Activated naive CD4-positive, alpha-beta T cell treated with anti-CD3 and anti-CD28 coated beads for 36 hours (primary cell): ENCODE measurements at regions of chr6 and their contacts with region 1.

Region 1: DNA sequence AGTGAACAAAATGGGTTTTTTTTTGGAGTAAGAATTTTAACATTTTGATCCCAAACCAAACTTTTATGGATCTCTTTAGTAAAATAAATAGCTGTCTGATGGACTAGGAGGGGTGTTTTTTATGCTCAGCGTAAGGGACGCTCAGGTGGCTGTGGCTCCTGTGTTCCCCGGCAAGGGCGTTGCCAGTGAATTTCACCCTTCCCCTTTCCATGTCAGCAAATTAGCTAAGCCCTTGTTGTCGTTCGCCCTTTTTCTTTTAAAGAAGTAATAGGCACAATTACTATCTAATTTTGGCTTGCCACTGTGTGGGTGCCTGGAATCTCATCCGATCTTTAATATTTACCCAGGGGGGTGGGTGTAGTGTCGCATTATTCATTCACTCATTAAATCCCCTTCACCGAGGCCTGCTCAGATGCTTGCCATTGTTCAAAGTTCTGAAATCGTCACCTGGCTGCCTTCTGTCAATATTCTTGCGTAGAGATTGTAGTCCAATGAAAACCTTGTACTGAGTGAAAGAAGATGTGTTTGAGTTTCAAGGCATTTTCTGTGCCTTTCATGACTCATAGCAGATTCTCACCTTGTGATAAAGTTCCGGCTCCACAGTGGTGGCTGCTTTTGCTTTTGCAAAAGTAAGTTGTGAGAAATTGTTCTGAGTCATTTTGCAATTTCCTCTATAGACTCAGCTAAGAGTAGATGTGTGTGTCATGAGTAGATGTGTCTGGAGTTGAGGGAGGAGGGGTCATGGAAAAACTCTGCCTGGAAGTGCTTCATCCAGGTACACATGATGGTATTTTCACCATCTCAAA is 40.0 kb upstream of the CLDN20 start:
- DNase-seq: peak; percentile 82
- H3K4me3 Mint-ChIP-seq: no peak overlapping the region
- H3K27ac Mint-ChIP-seq: peak overlapping the region; percentile 74
- H3K4me1 Mint-ChIP-seq: peaks cover 25% of the 10 kb centered on the region
- H3K27me3 Mint-ChIP-seq: peaks cover 18% of the 10 kb centered on the region

Region 2: GRCh38 chr6:154352898-154353585 is 870.8 kb before region 1 on chr6:
- CTCF ChIA-PET with region 1: no interaction called
- intact Hi-C with region 1: loop called (anchors 1 kb)
- DNase-seq: peak; percentile 83
- H3K4me3 Mint-ChIP-seq: no peak overlapping the region
- H3K27ac Mint-ChIP-seq: no peak overlapping the region
- H3K4me1 Mint-ChIP-seq: peaks cover 38% of the 10 kb centered on the region
- H3K27me3 Mint-ChIP-seq: peaks cover 25% of the 10 kb centered on the region

Region 3: DNA sequence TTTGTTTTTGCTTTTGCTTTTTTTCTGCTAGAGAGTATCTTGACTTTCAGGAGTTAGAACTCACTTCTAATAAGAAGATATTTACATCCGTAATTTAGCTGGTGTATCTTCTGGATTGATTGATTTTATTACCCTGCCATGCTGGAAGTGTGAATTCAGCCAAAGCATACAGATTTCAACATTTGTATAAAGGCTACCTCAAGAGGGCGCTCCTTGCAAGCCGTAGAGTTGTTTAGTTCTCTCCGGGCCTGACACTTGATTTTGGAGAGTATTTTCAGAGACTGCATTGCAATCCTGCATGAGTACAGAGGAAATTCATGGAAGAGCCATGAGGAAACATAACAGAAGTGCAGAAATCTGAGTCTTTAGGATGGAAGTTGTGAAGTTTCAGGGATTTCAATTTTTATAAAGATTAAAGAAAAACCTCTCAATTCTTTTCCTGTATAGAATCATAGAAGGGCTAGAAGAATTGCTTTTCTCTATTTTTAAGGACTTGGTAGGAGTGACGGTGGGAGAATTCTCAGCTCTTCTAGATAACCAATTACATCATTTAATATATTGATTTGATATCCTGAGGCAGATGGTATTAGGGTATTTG is 295.4 kb before region 1 on chr6:
- CTCF ChIA-PET with region 1: no interaction called
- intact Hi-C with region 1: loop called (anchors 1 kb)
- DNase-seq: peak; percentile 88
- H3K4me3 Mint-ChIP-seq: no peak overlapping the region
- H3K27ac Mint-ChIP-seq: no peak overlapping the region
- H3K4me1 Mint-ChIP-seq: peaks cover 3% of the 10 kb centered on the region
- H3K27me3 Mint-ChIP-seq: no peaks in the 10 kb centered on the region

Region 4: GRCh38 chr6:155026022-155026726 is 197.7 kb before region 1 on chr6:
- CTCF ChIA-PET with region 1: no interaction called
- intact Hi-C with region 1: no loop called
- DNase-seq: no peak
- H3K4me3 Mint-ChIP-seq: no peak overlapping the region
- H3K27ac Mint-ChIP-seq: no peak overlapping the region
- H3K4me1 Mint-ChIP-seq: peaks cover 5% of the 10 kb centered on the region
- H3K27me3 Mint-ChIP-seq: no peaks in the 10 kb centered on the region

Region 5: DNA sequence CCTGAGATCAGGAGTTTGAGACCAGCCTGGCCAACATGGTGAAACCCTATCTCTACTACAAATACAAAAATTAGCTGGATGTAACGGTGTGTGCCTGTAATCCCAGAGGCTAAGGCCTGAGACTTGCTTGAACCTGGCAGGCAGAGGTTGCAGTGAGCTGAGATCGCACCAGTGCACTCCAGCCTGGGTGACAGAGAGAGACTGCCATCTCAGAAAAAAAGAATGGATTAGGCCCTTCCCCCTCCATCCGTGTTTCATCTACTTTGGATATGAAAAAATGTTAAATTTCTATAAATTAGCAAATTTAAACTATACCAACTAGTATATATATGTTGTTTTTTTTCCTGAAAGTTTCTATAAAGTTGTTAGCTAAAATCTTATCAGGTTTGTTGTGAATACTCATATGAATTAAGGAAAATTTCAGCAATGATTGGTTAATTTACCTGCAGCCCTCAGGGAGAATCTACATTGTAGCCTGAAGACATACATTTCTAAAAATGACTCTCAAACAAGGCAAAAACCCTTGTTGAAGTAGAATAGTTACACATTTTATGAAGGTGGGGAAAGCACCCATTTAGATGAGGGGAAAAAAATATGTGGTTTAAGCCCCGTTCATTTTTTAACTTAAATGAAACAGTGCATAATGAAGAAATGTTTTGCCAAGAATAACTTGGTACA is 107.8 kb before region 1 on chr6:
- CTCF ChIA-PET with region 1: no interaction called
- intact Hi-C with region 1: loop called (anchors 1 kb)
- DNase-seq: no peak
- H3K4me3 Mint-ChIP-seq: no peak overlapping the region
- H3K27ac Mint-ChIP-seq: peak overlapping the region; percentile 37
- H3K4me1 Mint-ChIP-seq: peaks cover 15% of the 10 kb centered on the region
- H3K27me3 Mint-ChIP-seq: peaks cover 7% of the 10 kb centered on the region

Region 6: DNA sequence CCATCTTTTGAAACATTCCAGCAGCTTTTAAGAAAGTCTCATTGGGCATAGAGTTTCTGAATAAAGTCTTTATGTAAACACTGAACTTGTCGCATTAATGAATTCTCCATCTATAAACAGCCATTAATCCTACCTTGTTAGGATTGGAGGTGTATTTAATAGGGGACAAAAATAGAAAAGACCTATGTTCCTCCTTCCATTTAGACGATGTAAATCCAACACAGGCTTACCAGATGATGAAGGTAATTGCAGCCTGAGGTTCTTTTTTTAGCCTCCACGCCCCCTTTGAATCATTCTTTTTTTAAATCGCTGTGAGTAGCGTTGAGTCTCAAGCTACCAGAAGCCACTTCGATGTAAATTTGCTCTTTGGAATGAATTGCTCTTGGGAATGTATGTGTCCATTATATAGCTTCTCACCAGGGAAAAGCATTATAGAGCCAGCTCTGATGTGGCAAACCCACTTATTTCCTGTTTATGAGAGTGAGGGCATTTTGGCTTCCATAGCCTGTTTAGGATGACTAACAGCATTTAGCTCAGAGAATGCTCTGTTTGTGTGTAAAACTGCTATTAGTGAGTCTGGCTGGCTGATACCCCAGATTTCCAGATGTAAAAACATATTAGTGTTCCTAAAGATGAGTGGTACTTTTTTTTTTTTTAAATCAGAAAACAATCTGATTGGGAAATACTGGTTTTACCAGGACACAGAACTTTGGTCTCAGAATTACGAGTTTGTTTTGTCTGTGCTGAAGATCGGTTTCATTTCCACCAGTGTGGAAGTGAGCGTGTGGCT is 34.9 kb before region 1 on chr6:
- CTCF ChIA-PET with region 1: interaction called, 3 read pairs
- intact Hi-C with region 1: loop called (anchors 1 kb)
- DNase-seq: no peak
- H3K4me3 Mint-ChIP-seq: no peak overlapping the region
- H3K27ac Mint-ChIP-seq: no peak overlapping the region
- H3K4me1 Mint-ChIP-seq: peaks cover 50% of the 10 kb centered on the region
- H3K27me3 Mint-ChIP-seq: no peaks in the 10 kb centered on the region

Region 7: DNA sequence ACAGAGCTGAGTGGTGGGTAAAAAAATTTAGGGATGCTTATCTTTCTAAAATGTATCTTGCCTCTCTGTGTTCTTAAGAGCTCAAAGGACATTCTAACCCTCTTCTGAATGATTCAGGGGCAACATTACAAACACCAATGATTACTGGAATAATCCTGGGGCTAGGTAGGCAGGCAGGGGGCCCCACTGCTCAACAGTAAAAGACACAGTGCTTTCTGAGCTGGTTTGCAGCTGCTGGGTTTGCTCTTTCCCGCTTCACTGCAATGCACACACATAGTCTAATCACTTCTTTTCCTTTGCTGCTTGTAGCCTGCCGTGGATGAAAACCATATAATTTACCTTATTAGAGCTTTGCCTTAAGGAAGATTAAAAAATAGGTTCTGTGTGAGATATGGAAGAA is 63.9 kb after region 1 on chr6:
- CTCF ChIA-PET with region 1: no interaction called
- intact Hi-C with region 1: no loop called
- DNase-seq: no peak
- H3K4me3 Mint-ChIP-seq: no peak overlapping the region
- H3K27ac Mint-ChIP-seq: no peak overlapping the region
- H3K4me1 Mint-ChIP-seq: peaks cover 4% of the 10 kb centered on the region
- H3K27me3 Mint-ChIP-seq: no peaks in the 10 kb centered on the region